BJ (cell line): ENCODE measurements at regions of chr17 and their contacts with region 1.

Region 1: GRCh38 chr17:82037113-82037888 is at the start of gene DCXR:
- DNase-seq: peak; percentile 63
- H3K4me3 ChIP-seq: peak within 1 kb of the TSS; percentile 64
- H3K27me3 ChIP-seq: no peaks in the 10 kb centered on the region
- CTCF ChIP-seq: peak; percentile 53
- polyA plus RNA-seq, gene DCXR: 42.7 and 66.0 TPM in 2 replicates

Region 2: DNA sequence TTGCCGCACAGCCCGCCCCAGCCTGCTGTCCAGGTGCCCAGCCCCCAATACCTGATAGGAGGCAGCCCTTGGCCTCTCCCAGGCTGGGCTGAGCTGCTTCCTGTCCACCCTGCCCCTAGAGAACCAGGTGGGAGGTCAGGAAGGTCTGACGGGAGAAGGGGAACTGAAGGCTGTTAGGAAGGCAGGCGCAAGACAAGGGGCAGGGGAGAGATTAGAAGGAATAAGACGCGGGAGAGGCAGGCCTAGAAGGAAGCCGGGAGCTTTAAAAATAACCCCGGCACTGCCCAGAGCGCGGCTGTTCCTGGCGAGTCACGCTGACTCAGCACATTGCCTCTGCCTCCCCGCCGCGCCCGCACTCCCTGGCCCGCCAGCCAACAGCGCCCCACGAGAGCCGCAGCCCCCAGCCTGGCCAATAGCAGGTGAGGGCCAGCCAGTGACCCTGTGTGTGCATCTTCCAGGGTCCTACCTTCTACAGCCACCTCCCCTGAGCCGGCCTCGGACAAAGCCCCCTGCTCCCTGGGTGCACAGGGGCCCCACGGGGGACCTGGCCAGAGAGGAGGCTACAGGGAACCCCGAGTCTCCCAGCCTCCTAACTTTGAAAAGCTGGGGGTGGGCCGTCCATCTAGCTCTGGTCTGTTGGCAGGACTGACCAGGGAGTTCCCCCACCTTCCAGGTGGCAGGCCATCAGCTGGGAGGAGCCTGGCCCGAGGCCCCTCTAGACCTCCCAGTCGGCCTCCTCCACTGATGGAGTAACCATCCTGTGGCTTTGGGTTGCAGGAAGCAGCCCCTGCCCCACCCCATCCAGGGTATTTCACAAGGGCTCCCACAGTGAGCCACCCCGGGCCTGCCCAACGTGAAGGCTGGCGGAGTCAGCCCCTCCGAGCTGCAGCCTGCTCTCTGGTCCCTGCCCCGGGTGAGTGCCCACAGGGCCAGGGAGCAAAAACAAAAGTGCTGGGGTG is 113.7 kb before region 1 on chr17:
- CTCF ChIA-PET with region 1: interaction called, 3 read pairs
- POLR2A ChIA-PET with region 1: interaction called, 14 read pairs
- DNase-seq: no peak
- H3K4me3 ChIP-seq: peak overlapping the region; percentile 29
- H3K27me3 ChIP-seq: no peaks in the 10 kb centered on the region
- CTCF ChIP-seq: no peak

Region 3: GRCh38 chr17:82051776-82052637 is 14.7 kb after region 1 on chr17 and contains the starts of genes GPS1 and RFNG:
- CTCF ChIA-PET with region 1: interaction called, 23 read pairs
- POLR2A ChIA-PET with region 1: no interaction called
- DNase-seq: no peak
- H3K4me3 ChIP-seq: peak within 1 kb of the TSS; percentile 87
- H3K27me3 ChIP-seq: no peaks in the 10 kb centered on the region
- CTCF ChIP-seq: no peak
- polyA plus RNA-seq, gene GPS1: 79.7 and 131 TPM in 2 replicates
- polyA plus RNA-seq, gene RFNG: 15.8 and 23.7 TPM in 2 replicates

Region 4: DNA sequence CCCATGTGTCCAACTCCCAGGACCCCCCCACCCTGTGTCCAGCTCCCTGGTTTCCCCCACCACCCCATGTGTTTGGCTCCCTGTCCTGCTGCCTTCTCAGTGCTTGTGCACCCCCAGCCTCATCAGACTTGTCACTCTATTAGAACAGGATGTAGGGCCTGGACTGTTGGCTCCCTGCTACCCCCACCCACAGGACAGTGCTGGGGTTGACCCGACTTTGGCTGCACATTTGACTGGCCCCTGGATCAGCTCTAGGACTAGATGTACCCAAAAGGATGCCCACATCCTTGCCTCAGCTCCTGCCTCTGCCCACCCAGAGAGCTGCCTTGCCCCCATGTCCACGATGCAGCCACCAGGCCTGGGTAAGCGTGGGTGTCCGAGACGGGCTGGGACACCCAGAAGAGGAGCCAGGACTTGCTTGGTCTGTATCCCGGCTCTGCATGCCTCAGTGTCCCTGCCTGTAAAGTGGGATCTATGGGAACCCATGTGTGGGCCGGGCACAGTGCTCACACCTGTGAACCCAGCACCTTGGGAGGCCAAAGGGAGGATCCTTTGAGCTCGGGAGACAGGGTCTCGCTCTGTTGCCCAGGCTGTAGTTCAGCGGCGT is 176.8 kb after region 1 on chr17:
- CTCF ChIA-PET with region 1: no interaction called
- POLR2A ChIA-PET with region 1: no interaction called
- DNase-seq: no peak
- H3K4me3 ChIP-seq: no peak overlapping the region
- H3K27me3 ChIP-seq: no peaks in the 10 kb centered on the region
- CTCF ChIP-seq: no peak